Caco-2 (cell line): ENCODE measurements at regions of chr19 and their contacts with region 1.

Region 1: DNA sequence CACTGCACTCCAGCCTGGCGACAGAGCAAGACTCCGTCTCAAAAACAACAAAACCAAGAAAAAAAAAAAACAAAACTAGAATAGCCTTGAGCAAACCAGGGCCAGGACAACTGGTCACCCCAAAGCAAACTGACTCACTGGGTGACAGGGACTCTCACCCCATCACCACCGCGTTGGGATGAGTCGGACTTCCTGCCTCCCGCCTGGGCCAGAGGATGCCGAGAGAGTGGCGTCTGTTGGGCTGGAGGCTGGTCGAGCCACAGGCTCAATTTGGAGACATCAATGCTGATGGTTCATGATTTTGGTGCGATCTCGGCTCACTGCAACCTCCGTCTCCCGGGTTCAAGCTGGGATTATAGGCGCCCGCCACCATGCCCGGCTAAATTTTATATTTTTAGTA is 11.6 kb downstream of the TMPRSS9 start:
- DNase-seq: no peak
- H3K4me3 ChIP-seq: no peak overlapping the region
- H3K4me3 Mint-ChIP-seq: no peak overlapping the region
- H3K27ac Mint-ChIP-seq: peak overlapping the region; percentile 38
- H3K4me1 ChIP-seq: no peaks in the 10 kb centered on the region
- H3K4me1 Mint-ChIP-seq: peaks cover 13% of the 10 kb centered on the region
- H3K27me3 ChIP-seq: no peaks in the 10 kb centered on the region
- H3K27me3 Mint-ChIP-seq: no peaks in the 10 kb centered on the region
- CTCF ChIP-seq: no peak

Region 2: DNA sequence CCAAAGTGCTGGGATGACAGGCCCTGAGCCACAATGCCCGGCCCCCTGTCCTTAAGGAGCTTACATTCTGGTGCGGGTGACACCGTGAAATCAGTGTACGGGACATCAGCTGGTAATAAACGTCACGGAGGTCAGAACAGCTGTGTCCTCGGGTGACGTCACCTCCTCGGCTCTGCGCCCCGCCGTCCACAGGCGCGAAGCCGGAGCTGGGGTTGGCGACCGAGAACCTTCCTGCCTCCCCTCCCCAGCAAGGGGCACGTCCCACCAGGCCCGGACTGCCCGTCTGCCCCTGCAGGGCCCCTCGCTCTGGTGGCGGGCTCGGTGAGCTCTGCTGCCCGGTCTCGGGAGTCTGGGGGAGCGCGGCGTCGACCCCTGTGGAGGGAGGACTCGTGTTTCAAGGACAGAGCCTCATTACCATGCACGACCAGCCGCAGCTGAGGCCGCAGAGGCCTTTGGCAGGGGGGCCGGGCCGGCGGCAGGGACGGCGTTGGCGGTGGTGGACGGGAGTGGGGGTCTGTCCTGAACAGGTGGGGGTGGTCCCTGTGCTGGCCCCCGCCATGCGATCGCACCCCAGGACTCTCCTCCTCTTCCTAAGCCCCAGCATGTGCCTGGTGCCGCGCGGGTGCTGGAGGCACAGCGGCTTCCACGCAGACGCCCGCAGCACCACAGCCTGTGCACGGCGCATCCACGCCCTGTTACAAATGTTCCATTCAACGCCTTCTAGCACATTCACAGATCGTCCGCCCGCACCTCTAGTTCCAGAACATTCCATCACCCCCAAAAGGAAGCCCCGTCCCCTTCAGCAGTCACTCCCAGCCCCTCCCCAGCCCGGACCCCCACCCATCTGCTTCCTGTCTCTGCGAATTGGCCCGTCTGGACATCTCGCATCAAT is 69.1 kb before region 1 on chr19:
- CTCF ChIA-PET with region 1: no interaction called
- POLR2A ChIA-PET with region 1: no interaction called
- intact Hi-C with region 1: no loop called
- DNase-seq: no peak
- H3K4me3 ChIP-seq: no peak overlapping the region
- H3K4me3 Mint-ChIP-seq: no peak overlapping the region
- H3K27ac Mint-ChIP-seq: no peak overlapping the region
- H3K4me1 ChIP-seq: no peaks in the 10 kb centered on the region
- H3K4me1 Mint-ChIP-seq: no peaks in the 10 kb centered on the region
- H3K27me3 ChIP-seq: no peaks in the 10 kb centered on the region
- H3K27me3 Mint-ChIP-seq: no peaks in the 10 kb centered on the region
- CTCF ChIP-seq: no peak

Region 3: GRCh38 chr19:2385053-2385721 is 13.5 kb after region 1 on chr19:
- CTCF ChIA-PET with region 1: no interaction called
- POLR2A ChIA-PET with region 1: no interaction called
- intact Hi-C with region 1: no loop called
- DNase-seq: peak; percentile 67 to 88
- H3K4me3 ChIP-seq: no peak overlapping the region
- H3K4me3 Mint-ChIP-seq: no peak overlapping the region
- H3K27ac Mint-ChIP-seq: peak overlapping the region; percentile 73
- H3K4me1 ChIP-seq: peaks cover 5% of the 10 kb centered on the region; the same call in 1 of the 2 replicates
- H3K4me1 Mint-ChIP-seq: peaks cover 5% of the 10 kb centered on the region
- H3K27me3 ChIP-seq: no peaks in the 10 kb centered on the region
- H3K27me3 Mint-ChIP-seq: no peaks in the 10 kb centered on the region
- CTCF ChIP-seq: no peak

Region 4: DNA sequence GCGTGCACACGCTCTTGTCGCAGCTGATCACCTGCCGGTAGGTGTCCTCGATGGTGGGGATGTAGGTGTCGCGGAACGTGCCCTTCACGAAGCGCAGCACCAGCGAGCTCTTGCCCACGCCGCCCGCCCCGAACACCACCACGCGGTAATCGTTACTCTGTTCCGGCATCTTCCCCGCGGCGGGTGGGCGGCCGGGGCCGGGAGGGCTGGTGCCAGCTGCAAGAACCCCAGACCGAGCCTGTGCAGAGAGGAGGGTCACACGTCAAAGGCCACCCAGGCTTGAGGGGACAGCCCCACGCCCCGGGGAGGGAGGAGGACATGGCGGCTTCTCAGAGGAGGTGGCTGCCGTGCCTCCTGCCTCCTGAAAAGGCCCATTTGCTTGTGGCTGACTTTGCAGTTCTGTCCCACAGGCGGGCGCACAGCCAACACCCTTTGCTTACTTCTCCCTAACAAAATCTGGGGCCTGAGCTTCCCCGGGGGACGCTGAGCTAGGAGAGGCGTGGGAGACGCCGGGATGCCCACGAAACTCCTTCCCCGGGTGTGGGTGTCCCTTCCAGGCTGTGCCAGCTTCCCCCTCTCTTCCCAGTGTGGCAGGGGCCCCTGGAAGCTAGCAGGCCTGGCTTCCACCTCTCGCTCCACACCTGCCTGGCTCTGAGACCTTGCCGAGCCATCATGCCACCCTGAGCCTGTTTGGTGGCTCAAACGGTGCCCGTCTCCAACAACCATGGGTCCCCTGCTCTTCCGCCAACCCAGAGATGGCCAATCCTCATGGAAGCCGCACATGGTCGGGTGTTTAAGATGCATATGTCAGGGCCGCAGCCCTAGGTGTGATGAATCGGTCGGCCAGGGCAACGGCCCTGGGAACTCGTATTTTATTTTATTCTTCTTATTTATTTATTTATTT is 346.2 kb after region 1 on chr19:
- CTCF ChIA-PET with region 1: interaction called, 10 read pairs
- POLR2A ChIA-PET with region 1: no interaction called
- intact Hi-C with region 1: no loop called
- DNase-seq: no peak
- H3K4me3 ChIP-seq: no peak overlapping the region
- H3K4me3 Mint-ChIP-seq: no peak overlapping the region
- H3K27ac Mint-ChIP-seq: no peak overlapping the region
- H3K4me1 ChIP-seq: no peaks in the 10 kb centered on the region
- H3K4me1 Mint-ChIP-seq: no peaks in the 10 kb centered on the region
- H3K27me3 ChIP-seq: no peaks in the 10 kb centered on the region
- H3K27me3 Mint-ChIP-seq: peaks cover 6% of the 10 kb centered on the region
- CTCF ChIP-seq: no peak